MCF 10A (cell line): ENCODE measurements at regions of chr17 and their contacts with region 1.

Region 1: GRCh38 chr17:57995076-57995956 is 7.3 kb upstream of the VEZF1 start:
- DNase-seq: peak; percentile 85
- H3K4me3 Mint-ChIP-seq: no peak overlapping the region
- H3K27ac Mint-ChIP-seq: peak overlapping the region; percentile 50
- H3K4me1 Mint-ChIP-seq: peaks cover 6% of the 10 kb centered on the region
- H3K27me3 Mint-ChIP-seq: no peaks in the 10 kb centered on the region
- CTCF ChIP-seq: peak; percentile 70

Region 2: GRCh38 chr17:57490890-57491289 is 504.4 kb before region 1 on chr17:
- CTCF ChIA-PET with region 1: no interaction called
- POLR2A ChIA-PET with region 1: no interaction called
- intact Hi-C with region 1: no loop called
- DNase-seq: no peak
- H3K4me3 Mint-ChIP-seq: no peak overlapping the region
- H3K27ac Mint-ChIP-seq: no peak overlapping the region
- H3K4me1 Mint-ChIP-seq: no peaks in the 10 kb centered on the region
- H3K27me3 Mint-ChIP-seq: no peaks in the 10 kb centered on the region
- CTCF ChIP-seq: no peak

Region 3: DNA sequence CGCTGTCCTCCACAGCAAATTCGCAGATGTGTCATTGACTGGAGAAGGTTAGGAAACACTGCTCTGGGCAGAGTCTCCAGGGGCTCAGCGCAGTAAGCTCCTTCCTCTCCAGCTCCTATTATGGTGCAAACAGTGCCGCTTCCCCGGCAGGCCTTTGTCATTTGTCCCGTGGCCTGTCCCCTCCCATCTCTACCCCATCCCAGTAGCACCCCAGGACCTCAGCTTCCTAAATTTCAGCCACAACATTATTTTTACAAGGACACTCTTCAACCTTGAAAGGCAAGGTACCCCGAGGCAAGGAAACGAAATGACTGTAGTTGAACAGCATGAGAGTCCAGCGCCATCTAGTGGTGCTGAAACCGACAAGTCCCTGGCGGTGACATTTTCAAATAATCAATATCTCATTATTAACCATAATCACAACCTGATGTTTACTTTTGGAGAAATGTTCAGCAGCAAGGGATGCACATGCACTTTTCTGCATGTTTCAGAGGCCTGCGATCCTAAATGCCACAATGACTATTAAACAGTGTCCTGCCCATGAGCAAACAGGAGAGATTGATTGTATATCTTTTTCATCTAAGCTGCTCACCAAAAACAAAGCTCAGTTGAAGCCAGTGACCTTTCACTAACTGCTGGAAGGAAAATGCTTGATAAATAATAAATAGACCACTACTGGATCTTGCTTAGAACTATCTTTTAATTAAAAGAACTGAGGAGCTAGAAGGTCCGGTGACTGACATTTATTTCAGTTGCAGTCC is 162.0 kb before region 1 on chr17:
- CTCF ChIA-PET with region 1: interaction called, 38 read pairs
- POLR2A ChIA-PET with region 1: interaction called, 3 read pairs
- intact Hi-C with region 1: no loop called
- DNase-seq: peak; percentile 70
- H3K4me3 Mint-ChIP-seq: no peak overlapping the region
- H3K27ac Mint-ChIP-seq: no peak overlapping the region
- H3K4me1 Mint-ChIP-seq: peaks cover 15% of the 10 kb centered on the region
- H3K27me3 Mint-ChIP-seq: no peaks in the 10 kb centered on the region
- CTCF ChIP-seq: peak; percentile 78

Region 4: DNA sequence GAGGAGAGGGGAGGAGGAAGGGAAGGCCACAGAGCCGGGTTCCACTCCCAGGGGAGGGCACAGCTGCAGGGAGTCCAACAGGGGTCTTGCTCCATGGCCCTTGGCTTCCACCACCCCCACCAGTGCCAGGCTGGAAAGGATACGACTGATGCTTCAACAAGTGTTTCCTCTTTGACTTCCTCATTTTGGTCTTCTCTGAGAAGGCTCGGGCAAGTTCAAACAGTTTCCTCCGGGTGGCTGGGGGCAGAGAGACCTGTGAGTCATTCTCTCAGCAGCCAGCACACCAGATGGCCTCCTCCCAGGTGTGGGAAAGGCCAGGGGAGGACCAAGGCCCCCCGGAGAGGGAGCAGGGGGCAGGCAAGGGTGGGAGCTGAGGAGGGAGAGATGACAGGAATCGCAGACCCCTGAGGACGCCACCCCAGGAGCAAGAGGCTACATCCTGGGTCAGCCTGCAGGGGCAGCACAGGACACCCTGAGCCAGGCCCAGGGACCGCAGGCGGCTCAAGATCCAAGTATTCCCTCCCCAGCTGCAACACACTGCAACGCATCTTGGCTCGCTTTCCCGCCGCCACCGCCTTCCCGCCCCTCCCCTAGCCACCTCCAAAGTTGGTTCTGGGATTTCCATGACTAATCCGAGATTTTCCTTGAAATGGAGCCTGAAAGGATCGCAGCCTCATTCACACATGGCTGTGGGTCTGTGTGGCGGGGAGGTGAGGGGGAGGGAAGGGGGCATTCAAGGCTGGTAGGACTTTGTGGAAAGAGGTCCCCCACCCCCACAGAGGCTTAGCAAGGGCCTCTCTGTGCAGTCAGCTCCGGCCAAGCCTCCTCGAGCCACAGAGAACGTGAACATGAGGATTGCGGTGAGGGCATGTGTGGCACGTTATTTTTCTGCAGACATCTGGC is 127.1 kb before region 1 on chr17:
- CTCF ChIA-PET with region 1: interaction called, 36 read pairs
- POLR2A ChIA-PET with region 1: interaction called, 6 read pairs
- intact Hi-C with region 1: no loop called
- DNase-seq: peak; percentile 93
- H3K4me3 Mint-ChIP-seq: peak overlapping the region; percentile 41
- H3K27ac Mint-ChIP-seq: peak overlapping the region; percentile 93
- H3K4me1 Mint-ChIP-seq: peaks cover 33% of the 10 kb centered on the region
- H3K27me3 Mint-ChIP-seq: no peaks in the 10 kb centered on the region
- CTCF ChIP-seq: peak; percentile 65

Region 5: GRCh38 chr17:57892146-57892828 is 103.0 kb before region 1 on chr17:
- CTCF ChIA-PET with region 1: interaction called, 28 read pairs
- POLR2A ChIA-PET with region 1: interaction called, 11 read pairs
- intact Hi-C with region 1: loop called (anchors 2 kb)
- DNase-seq: peak; percentile 91
- H3K4me3 Mint-ChIP-seq: peak overlapping the region; percentile 64
- H3K27ac Mint-ChIP-seq: peak overlapping the region; percentile 87
- H3K4me1 Mint-ChIP-seq: peaks cover 41% of the 10 kb centered on the region
- H3K27me3 Mint-ChIP-seq: no peaks in the 10 kb centered on the region
- CTCF ChIP-seq: peak; percentile 96

Region 6: DNA sequence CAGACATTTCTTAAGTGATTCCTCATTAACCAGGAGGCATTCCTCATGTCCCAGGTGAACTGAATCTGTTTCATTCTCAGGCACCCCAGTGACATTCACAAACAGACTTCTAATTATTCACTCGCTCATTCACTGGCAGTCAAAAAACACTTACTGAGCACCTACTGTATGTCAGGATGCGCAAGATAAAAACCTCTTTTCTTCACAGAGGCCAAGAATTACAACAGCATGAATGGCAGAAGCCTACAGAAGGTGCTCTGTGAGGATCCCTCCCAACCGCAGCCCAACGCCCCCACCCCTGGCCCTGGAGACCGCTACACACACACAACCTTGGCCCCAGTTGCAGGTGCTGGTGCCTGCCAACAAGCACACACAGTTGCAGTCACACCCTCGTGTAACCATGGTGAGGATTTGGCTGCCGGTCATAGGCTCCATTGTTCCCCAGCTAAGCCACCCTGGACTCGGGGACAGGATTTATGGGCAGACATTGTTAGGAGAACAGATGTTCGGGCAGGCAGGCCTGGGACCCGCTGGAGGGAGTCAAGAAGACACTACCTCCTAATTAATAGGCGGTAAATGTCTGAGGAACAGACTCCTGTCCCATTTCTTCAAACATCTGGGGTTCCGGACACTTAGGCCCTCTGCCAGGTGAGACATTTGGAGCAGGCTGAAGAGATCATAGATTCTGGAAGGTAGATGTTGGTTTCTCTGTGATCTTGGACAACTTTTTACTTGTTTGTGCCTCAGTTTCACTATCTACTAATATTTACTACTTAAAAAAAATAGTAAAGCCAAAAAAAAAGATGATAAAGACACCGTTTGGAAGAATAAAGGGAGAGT is 83.3 kb before region 1 on chr17:
- CTCF ChIA-PET with region 1: no interaction called
- POLR2A ChIA-PET with region 1: no interaction called
- intact Hi-C with region 1: no loop called
- DNase-seq: peak; percentile 90
- H3K4me3 Mint-ChIP-seq: peak overlapping the region; percentile 64
- H3K27ac Mint-ChIP-seq: peak overlapping the region; percentile 91
- H3K4me1 Mint-ChIP-seq: peaks cover 35% of the 10 kb centered on the region
- H3K27me3 Mint-ChIP-seq: no peaks in the 10 kb centered on the region
- CTCF ChIP-seq: no peak

Region 7: GRCh38 chr17:57955183-57955931 is 40.0 kb before region 1 on chr17 and contains the start of gene CUEDC1:
- CTCF ChIA-PET with region 1: interaction called, 14 read pairs
- POLR2A ChIA-PET with region 1: interaction called, 5 read pairs
- intact Hi-C with region 1: no loop called
- DNase-seq: peak; percentile 53
- H3K4me3 Mint-ChIP-seq: peak within 1 kb of the TSS; percentile 70
- H3K27ac Mint-ChIP-seq: no peak within 1 kb of the TSS
- H3K4me1 Mint-ChIP-seq: peaks cover 22% of the 10 kb centered on the region
- H3K27me3 Mint-ChIP-seq: no peaks in the 10 kb centered on the region
- CTCF ChIP-seq: peak; percentile 23
- total RNA-seq, gene CUEDC1: 15.6 and 21.5 TPM in 2 replicates

Region 8: DNA sequence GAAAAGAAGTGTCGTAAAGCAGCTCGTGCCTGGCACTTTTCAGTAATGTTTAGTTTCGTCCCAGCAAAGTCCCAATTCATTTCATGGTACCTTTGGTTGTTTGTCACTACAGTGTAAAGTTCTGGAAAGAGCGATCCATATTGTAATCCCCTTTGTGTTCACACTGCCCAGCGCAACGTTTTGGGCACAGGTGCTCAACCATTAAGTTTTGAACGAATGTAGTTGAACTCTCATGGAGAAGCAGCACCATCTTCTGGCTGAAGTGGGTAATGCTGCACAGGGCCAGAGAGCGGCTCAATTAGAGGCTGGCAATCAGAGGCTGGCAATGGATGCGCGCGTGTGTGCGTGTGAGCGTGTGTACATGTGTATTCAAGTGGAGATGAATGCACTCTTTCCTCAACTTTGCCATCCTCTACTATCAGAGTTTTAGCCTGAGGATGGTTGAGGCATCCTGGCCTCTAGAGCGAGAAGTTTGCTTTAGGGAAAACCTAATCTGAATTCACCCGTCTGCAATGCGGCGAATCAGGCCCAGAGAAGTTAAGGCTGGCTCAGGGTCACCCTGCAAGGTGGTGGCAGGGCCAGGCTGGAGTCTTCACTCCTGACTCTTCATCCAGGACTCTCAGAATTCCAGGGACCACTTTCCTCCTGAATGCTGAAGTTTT is 117.8 kb after region 1 on chr17:
- CTCF ChIA-PET with region 1: interaction called, 7 read pairs
- POLR2A ChIA-PET with region 1: interaction called, 6 read pairs
- intact Hi-C with region 1: loop called (anchors 2 kb)
- DNase-seq: peak; percentile 81
- H3K4me3 Mint-ChIP-seq: no peak overlapping the region
- H3K27ac Mint-ChIP-seq: no peak overlapping the region
- H3K4me1 Mint-ChIP-seq: no peaks in the 10 kb centered on the region
- H3K27me3 Mint-ChIP-seq: peaks cover 16% of the 10 kb centered on the region
- CTCF ChIP-seq: peak; percentile 93